Naive thymus-derived CD4-positive, alpha-beta T cell (primary cell): ENCODE measurements at regions of chr1 and their contacts with region 1.

Region 1: GRCh38 chr1:109564194-109564878 is 15.9 kb downstream of the GNAI3 start:
- DNase-seq: no peak
- ATAC-seq: no peak
- H3K4me3 ChIP-seq: no peak overlapping the region
- H3K4me3 Mint-ChIP-seq: peak overlapping the region in 4 of 10 donors; percentile 7 to 54 (median 27)
- H3K27ac ChIP-seq: no peak overlapping the region
- H3K27ac Mint-ChIP-seq: peak overlapping the region in 6 of 9 donors; percentile 16 to 66 (median 52)
- H3K4me1 ChIP-seq: peaks cover 12 to 13% of the 10 kb centered on the region in 2 donors
- H3K4me1 Mint-ChIP-seq: peaks cover 42 to 77% (median 64%) of the 10 kb centered on the region in 7 donors
- H3K27me3 ChIP-seq: no peaks in the 10 kb centered on the region
- H3K27me3 Mint-ChIP-seq: no peaks in the 10 kb centered on the region

Region 2: GRCh38 chr1:109603233-109603632 is 38.9 kb after region 1 on chr1:
- CTCF ChIA-PET with region 1: no interaction called
- POLR2A ChIA-PET with region 1: no interaction called
- intact Hi-C with region 1: loop called in 1 of 2 experiments (anchors 5 kb)
- DNase-seq: peak in 2 of 9 donors; percentile 13 to 19
- ATAC-seq: peak; percentile 59
- H3K4me3 ChIP-seq: no peak overlapping the region
- H3K4me3 Mint-ChIP-seq: peak overlapping the region in 3 of 10 donors; percentile 2 to 26 (median 25)
- H3K27ac ChIP-seq: no peak overlapping the region
- H3K27ac Mint-ChIP-seq: peak overlapping the region in 4 of 9 donors; percentile 18 to 72 (median 43)
- H3K4me1 ChIP-seq: peaks cover 0 to 9% of the 10 kb centered on the region in 2 donors
- H3K4me1 Mint-ChIP-seq: peaks cover 9 to 34% (median 24%) of the 10 kb centered on the region in 7 donors
- H3K27me3 ChIP-seq: no peaks in the 10 kb centered on the region
- H3K27me3 Mint-ChIP-seq: no peaks in the 10 kb centered on the region